Activated T-helper 1 cell treated with anti-CD3 and anti-CD28 coated beads, Interleukin-12 subunit alpha, Interleukin-12 subunit beta, Interleukin-2, Interleukin-4 antibody, amounts not matched to agents 30 ng/mL and 10 ng/mL and 1 ng/mL, durations not matched to agents 14 hours and 24 hours and 36 hours (primary cell): ENCODE measurements at regions of chr5 and their contacts with region 1.

Region 1: DNA sequence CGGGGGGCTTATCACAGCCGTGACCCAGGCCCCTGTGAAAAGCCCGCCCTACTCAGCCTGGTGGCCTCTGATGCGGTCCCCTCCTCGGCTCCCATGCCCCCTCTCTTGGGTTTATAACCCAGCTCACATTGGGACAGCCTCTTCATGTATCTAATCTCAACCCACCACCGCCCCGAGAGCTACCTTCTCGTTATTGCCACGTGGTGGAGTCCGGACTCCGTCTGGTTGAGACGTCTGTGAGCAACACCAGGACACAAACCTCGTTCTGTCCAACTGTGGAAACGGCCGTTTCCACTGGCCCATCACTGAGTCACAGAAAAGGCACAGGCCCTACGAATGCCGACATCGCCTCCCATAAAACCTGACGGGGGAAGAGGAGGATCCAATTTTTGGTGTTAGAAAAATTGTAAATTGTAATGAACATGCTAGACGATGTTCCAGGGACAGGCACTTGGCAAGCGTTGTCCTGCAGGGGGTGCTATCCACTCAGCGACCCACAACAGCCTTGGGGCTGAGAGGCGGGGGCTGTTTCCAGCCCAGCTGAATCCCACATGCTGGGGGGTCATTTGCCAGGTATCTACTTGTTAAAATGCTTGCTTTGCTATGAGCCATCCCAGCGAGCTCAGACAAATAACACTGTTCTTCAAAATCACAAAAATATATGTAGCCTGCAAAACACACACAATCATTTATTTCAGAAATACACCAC is 37.3 kb upstream of the N4BP3 start:
- DNase-seq: peak; percentile 62
- H3K4me3 Mint-ChIP-seq: no peak overlapping the region
- H3K27ac Mint-ChIP-seq: no peak overlapping the region
- H3K4me1 Mint-ChIP-seq: peaks cover 6% of the 10 kb centered on the region
- H3K27me3 Mint-ChIP-seq: peaks cover 9% of the 10 kb centered on the region

Region 2: DNA sequence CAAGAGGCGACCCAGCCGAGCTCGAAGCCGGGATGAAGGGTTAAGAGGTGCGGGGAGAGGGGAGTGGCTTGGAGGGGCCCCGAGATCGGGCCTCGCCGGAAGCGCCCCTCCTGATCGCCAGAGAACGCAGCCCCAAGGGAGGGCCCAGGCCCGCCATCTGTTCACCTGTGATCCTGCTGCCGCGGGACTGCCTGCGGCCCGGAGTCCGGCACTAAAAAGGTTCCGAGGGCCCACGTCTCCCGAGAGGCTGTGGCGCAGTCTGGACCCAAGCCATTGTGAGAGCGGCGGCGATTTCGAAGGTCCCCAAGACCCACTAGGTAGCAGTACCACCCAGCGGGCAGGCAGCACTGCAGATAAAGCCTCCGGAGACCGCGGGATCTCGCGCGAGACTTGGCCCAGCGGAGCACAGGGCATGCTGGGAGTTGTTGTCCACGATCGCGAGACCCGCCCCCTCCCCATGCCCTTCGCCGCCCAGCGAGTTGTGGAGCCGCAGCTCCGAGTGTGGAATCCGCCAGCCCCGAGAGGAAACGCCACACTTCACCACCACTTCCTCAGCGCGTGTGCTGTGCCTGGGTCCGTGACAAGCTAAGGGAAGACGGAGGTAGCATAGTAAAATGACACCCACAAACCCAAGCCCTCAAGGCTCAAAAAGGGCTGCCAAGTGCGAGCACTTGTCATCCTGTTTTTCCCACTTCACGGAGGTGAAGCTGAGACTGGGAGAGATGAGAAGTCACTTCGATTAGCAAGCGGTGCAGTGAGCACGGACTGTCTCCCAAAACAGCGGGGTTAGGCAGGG is 1714.4 kb before region 1 on chr5 and contains the start of gene KIAA1191:
- intact Hi-C with region 1: no loop called
- DNase-seq: peak; percentile 93
- H3K4me3 Mint-ChIP-seq: peak within 1 kb of the TSS; percentile 97
- H3K27ac Mint-ChIP-seq: peak within 1 kb of the TSS; percentile 91
- H3K4me1 Mint-ChIP-seq: peaks cover 36% of the 10 kb centered on the region
- H3K27me3 Mint-ChIP-seq: no peaks in the 10 kb centered on the region
- total RNA-seq, gene KIAA1191: 60.9 and 63.4 TPM in 2 replicates

Region 3: DNA sequence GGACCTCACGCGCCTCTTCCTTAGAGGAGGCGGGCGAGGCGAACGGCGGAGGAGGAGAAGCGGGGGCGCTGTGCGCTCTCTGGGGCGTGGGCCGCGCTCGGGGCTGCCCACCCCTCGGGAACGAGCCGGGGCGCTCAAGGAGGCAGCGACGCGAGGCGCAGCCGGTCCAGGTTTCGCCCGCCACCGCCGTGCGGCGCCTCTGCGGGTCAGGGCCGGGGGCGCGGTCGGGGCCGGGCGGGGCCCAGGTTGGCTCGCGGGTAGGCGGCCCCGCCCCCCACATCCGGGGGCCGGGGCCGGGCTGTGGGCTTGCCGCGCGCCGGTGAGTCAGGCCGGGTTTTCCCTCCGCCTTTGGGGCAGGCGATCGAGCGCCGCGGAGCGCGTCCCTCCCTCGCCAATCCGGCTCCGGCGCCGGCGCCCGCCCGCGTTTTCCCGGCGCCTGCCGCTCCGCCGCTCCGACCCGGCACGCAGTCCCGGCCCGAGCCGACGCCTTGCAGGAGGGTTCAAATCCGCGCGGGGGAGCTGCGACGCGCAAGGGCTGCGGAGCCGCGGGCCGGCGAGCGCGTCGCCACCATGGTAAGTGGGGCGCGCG is 37.3 kb after region 1 on chr5 and contains the start of gene N4BP3:
- intact Hi-C with region 1: loop called (anchors 2 kb)
- DNase-seq: peak; percentile 83
- H3K4me3 Mint-ChIP-seq: peak within 1 kb of the TSS; percentile 89
- H3K27ac Mint-ChIP-seq: peak within 1 kb of the TSS; percentile 92
- H3K4me1 Mint-ChIP-seq: peaks cover 37% of the 10 kb centered on the region
- H3K27me3 Mint-ChIP-seq: peaks cover 38% of the 10 kb centered on the region
- total RNA-seq, gene N4BP3: 1.8 TPM in 2 replicates

Region 4: DNA sequence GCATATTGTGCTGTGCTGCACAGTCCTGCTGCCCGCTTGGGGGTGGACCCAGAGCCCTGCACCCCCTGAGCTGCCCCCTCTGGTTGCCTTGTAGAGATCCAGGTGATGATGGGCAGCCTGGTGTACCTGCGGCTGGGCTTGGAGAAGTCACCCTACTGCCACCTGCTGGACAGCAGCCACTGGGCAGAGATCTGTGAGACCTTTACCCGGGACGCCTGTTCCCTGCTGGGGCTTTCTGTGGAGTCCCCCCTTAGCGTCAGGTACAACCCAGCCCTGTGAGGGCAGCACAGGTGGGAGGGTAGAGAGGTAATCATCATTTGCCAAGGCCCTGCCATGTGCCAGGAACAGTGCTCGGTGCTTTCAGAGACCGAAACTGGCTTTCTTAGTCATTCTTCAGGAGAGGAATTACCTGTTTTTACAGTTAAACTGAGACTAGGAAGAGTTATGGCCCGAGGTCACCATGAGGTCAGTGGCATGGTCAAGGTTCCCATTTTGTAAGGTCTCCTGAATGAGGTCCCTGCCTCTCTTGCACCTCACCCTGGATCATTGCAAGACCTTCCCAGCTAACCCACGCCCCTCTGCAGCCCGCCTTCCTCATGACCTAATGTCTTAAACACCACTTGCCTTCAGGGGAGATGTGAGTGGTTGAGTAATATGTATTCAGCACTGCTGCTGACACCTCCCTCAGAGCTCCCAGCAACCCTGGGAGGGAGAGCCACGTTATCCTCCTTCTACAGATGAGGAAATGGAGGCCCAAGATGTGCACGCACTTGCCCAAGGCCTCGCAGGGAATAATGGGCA is 70.2 kb after region 1 on chr5:
- intact Hi-C with region 1: loop called (anchors 1 kb)
- DNase-seq: peak; percentile 49
- H3K4me3 Mint-ChIP-seq: no peak overlapping the region
- H3K27ac Mint-ChIP-seq: no peak overlapping the region
- H3K4me1 Mint-ChIP-seq: peaks cover 50% of the 10 kb centered on the region
- H3K27me3 Mint-ChIP-seq: no peaks in the 10 kb centered on the region

Region 5: DNA sequence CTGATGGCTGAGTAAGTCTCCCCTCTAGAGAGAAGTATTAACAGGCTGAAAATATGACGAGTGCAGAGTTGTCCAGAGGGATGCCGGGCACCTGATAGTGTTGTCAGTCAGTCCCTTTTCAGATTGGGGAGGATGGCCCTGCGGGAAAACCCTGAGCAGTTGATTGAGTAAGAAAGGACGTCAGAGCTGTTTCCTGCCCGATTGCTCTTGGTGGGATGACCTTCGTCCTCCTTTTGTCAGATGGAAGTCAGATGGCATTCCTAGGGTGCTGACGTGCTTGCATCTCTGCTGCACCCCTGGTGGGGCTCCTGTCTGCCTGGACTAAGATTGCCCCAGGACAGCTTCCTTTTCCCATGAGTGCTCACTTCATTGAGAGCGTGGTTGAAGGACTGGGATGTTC is 793.6 kb after region 1 on chr5:
- intact Hi-C with region 1: no loop called
- DNase-seq: no peak
- H3K4me3 Mint-ChIP-seq: no peak overlapping the region
- H3K27ac Mint-ChIP-seq: no peak overlapping the region
- H3K4me1 Mint-ChIP-seq: no peaks in the 10 kb centered on the region
- H3K27me3 Mint-ChIP-seq: no peaks in the 10 kb centered on the region